Left ventricle myocardium superior (tissue), 1 donor: ENCODE measurements at regions of chr4 and their contacts with region 1.

Region 1: GRCh38 chr4:100742045-100742444 is 224.2 kb upstream of the EMCN start:
- DNase-seq: no peak
- ATAC-seq: no peak

Region 2: GRCh38 chr4:100093091-100093866 is 648.8 kb before region 1 on chr4:
- intact Hi-C with region 1: loop called (anchors 10 kb)
- DNase-seq: peak; percentile 68
- ATAC-seq: peak; percentile 88

Region 3: DNA sequence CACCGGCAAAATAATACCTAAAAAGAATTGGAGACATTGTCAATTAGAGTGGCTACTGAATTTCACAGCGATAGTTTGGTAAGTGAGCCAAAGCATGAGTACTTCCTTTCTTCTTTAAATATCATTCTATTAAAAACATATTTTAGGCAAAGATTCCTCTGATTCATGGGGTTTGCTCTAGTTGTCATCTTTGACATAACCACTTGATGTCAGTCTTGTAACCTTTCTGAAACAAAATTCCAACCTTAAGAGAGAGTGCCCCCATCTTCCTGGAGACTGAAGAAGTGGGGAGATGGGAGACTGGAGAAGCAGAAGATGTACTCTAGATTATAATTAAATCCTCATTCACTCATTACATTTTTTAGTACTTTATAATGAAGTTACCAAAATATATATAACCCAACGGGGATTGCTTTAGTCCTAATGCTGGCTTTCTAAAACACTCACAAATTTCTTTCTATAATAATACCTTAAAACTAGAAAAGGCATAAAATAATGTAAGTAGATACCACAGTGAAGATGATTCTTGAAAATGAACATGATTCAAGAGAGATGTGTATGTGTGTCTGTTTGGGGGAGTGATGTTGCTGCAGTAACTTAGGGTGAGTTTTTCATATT is 320.6 kb before region 1 on chr4:
- intact Hi-C with region 1: loop called (anchors 10 kb)
- DNase-seq: no peak
- ATAC-seq: no peak